MCF 10A (cell line): ENCODE measurements at regions of chr4 and their contacts with region 1.

Region 1: DNA sequence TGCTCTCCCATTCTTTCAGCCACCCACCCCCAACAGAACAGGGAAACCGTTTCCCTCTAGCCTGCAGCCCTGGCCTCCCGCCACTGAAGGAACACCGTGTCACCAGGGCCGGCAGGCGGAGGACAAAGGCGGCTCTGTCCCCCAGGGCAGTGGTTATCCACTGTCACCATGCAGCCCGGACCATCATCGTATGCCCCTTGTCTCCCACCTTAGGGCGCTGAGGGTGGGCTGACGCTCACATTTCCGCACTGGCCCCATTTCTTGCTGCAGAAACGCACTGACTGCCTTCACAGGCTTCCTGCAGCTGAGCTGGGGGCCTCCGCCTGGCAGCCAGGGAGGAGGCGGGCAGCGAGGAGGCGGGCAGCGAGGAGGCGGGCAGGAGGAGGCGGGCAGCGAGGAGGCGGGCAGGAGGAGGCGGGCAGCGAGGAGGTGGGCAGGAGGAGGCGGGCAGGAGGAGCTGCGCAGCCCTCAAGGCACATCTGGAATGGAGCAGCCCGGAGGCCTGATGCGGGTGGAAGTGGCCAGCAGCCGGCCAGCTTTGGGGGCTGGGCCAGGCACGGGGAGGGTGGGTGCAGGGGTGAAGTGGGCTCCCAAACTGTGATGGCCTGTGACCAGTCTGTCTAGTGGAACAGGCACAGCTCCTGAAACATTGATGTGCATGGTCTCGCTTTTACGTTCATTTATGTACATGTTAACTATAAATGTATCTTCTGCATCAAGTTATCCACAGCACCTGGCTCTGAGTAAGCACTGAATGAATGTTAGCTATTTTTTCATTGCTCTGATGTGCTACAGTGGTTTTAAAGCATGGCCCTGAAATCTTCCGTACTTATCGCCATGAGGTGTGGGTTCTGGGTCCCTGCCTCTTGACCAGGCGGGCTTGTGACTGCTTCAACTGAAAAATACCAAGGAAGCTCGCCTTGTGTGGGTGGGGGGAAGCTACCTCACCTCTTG is 20.6 kb upstream of the KIAA0232 start:
- DNase-seq: no peak
- H3K4me3 Mint-ChIP-seq: no peak overlapping the region
- H3K27ac Mint-ChIP-seq: no peak overlapping the region
- H3K4me1 Mint-ChIP-seq: peaks cover 25% of the 10 kb centered on the region
- H3K27me3 Mint-ChIP-seq: no peaks in the 10 kb centered on the region
- CTCF ChIP-seq: no peak

Region 2: DNA sequence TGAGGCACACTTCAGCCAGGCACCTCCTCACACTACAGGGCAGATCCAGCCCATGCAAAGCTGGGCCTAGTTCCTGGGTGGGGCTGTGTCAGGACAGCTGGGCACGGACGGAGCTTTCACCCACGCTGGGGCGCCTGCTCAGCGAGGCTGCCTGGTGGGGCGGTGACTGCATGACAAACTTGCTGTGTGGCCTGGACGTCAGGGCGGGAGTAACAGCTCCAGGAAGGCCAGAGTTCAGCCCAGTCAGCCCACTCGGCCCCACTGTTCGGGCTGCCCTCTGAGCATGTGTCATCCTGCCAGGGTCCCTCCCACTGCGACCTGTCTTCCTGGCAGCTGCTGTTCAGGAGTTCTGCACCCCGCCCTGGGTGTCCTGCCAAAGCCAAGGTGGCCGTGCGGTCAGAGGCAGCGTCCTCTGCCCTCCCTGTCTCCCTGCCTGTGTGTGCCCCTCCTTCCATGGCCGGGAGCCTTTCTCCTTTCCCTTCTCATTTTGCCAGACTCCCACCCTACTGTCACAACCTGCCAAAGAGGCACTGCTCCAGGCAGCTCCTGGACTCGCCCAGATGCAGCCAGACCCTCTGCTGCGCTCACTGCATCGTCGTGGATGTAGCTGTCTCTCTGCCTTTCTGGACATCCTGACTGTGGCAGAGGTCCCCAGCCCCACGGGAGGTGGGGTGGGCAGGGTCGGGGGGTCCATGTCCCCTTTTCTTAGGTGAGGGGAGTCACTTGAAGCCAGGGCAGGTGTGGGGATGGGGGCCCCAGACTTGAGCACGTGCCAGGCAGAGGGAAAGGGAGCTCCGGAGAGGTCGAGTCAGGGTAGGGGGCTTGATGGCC is 12.4 kb before region 1 on chr4:
- CTCF ChIA-PET with region 1: interaction called, 4 read pairs
- POLR2A ChIA-PET with region 1: interaction called, 15 read pairs
- intact Hi-C with region 1: no loop called
- DNase-seq: peak; percentile 73
- H3K4me3 Mint-ChIP-seq: peak overlapping the region; percentile 41
- H3K27ac Mint-ChIP-seq: peak overlapping the region; percentile 60
- H3K4me1 Mint-ChIP-seq: peaks cover 23% of the 10 kb centered on the region
- H3K27me3 Mint-ChIP-seq: no peaks in the 10 kb centered on the region
- CTCF ChIP-seq: no peak

Region 3: GRCh38 chr4:6794189-6794588 is 32.3 kb after region 1 on chr4:
- CTCF ChIA-PET with region 1: no interaction called
- POLR2A ChIA-PET with region 1: no interaction called
- intact Hi-C with region 1: no loop called
- DNase-seq: no peak
- H3K4me3 Mint-ChIP-seq: no peak overlapping the region
- H3K27ac Mint-ChIP-seq: no peak overlapping the region
- H3K4me1 Mint-ChIP-seq: peaks cover 40% of the 10 kb centered on the region
- H3K27me3 Mint-ChIP-seq: no peaks in the 10 kb centered on the region
- CTCF ChIP-seq: no peak